Activated CD4-positive, alpha-beta memory T cell treated with anti-CD3 and anti-CD28 coated beads for 36 hours (primary cell): ENCODE measurements at regions of chrX and their contacts with region 1.

Region 1: GRCh38 chrX:48683411-48683982 is at the start of gene WAS:
- DNase-seq: peak; percentile 67
- H3K4me3 Mint-ChIP-seq: peak within 1 kb of the TSS; percentile 92
- H3K27ac Mint-ChIP-seq: peak within 1 kb of the TSS; percentile 97
- H3K4me1 Mint-ChIP-seq: peaks cover 55% of the 10 kb centered on the region
- H3K27me3 Mint-ChIP-seq: no peaks in the 10 kb centered on the region
- total RNA-seq, gene WAS: 95.2 to 99.6 TPM

Region 2: GRCh38 chrX:48617542-48618340 is 65.8 kb before region 1 on chrX:
- CTCF ChIA-PET with region 1: no interaction called
- POLR2A ChIA-PET with region 1: no interaction called
- intact Hi-C with region 1: no loop called
- DNase-seq: peak; percentile 9
- H3K4me3 Mint-ChIP-seq: no peak overlapping the region
- H3K27ac Mint-ChIP-seq: no peak overlapping the region
- H3K4me1 Mint-ChIP-seq: no peaks in the 10 kb centered on the region
- H3K27me3 Mint-ChIP-seq: no peaks in the 10 kb centered on the region

Region 3: GRCh38 chrX:48696301-48697181 is 13.0 kb after region 1 on chrX and contains the start of gene SUV39H1:
- CTCF ChIA-PET with region 1: interaction called, 3 read pairs
- POLR2A ChIA-PET with region 1: interaction called, 16 read pairs
- intact Hi-C with region 1: loop called (anchors 2 kb)
- DNase-seq: peak; percentile 91
- H3K4me3 Mint-ChIP-seq: peak within 1 kb of the TSS; percentile 87
- H3K27ac Mint-ChIP-seq: peak within 1 kb of the TSS; percentile 92
- H3K4me1 Mint-ChIP-seq: peaks cover 26% of the 10 kb centered on the region
- H3K27me3 Mint-ChIP-seq: no peaks in the 10 kb centered on the region
- total RNA-seq, gene SUV39H1: 32.3 to 35.6 TPM